ENCODE measurements at regions of chr19 and their contacts with region 1.

Region 1: DNA sequence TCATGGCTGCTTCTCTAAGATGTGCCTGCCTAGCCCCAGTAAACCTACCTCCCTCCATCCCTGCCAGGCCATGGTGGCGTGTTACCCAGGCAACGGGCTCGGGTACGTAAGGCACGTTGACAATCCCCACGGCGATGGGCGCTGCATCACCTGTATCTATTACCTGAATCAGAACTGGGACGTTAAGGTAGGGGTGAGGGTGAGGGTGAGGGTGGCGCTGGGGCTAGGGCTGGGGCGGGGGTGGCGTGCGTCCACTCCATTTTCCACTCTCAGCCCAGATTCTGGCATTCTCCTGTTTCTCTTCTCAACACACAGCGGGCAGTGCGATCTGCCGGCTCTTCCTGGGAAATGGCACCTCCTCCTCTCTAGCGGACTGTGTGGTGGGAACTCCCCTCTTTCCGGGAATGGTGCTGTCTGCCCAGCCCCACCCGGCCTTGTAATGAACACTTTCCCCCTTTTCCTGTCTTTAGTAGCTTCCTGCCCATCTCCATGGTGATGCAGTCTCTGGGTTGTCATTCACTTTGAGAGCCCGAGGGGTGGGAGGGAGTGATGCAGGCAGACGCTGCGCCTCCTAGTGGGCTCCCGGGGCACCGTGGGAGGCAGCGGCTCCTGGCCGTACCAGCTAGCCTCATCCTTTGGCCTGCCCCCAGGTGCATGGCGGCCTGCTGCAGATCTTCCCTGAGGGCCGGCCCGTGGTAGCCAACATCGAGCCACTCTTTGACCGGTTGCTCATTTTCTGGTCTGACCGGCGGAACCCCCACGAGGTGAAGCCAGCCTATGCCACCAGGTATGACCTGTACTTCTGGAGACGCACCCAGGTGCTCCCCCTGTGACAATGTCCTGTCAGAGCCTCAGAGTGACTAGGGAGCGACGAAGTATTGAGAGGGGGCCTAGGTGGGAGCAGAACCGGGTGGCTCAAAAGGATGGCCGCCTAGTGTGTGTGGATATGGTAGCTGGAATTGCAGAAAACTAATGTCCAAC is 7.8 kb downstream of the EGLN2 start:
- DNase-seq: peak; percentile 81
- H3K4me3 ChIP-seq: no peak overlapping the region
- H3K27ac ChIP-seq: peak overlapping the region; percentile 81
- H3K4me1 ChIP-seq: peaks cover 66% of the 10 kb centered on the region
- CTCF ChIP-seq: peak; percentile 92

Region 2: GRCh38 chr19:39833464-39834286 is 973.1 kb before region 1 on chr19 and contains the start of gene DYRK1B:
- CTCF ChIA-PET with region 1: interaction called, 12 read pairs
- POLR2A ChIA-PET with region 1: no interaction called
- intact Hi-C with region 1: no loop called
- DNase-seq: peak; percentile 97
- H3K4me3 ChIP-seq: peak within 1 kb of the TSS; percentile 68
- H3K27ac ChIP-seq: peak within 1 kb of the TSS; percentile 22
- H3K4me1 ChIP-seq: peaks cover 16% of the 10 kb centered on the region
- CTCF ChIP-seq: no peak
- total RNA-seq, gene DYRK1B: 2.0 and 3.0 TPM in 2 replicates

Region 3: DNA sequence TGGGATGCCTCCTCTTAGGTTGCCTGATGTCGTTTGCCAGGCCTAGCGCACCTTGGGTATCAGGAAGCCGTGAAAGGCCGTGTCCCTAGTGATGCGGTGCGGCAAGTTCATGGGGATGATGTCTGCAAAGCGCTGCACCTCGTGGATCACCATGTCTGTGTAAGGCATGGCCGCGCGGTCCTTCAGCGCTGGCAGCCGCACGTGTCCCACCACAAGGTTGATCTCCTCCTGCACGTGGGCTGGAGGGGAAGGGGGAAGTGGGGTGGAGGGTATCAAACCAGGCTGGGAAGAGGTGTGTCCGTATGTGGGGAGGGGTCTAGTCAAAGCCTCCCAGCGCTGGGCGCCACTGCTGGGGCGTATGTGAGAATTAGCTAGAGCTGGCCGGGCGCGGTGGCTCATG is 15.4 kb after region 1 on chr19:
- CTCF ChIA-PET with region 1: no interaction called
- POLR2A ChIA-PET with region 1: no interaction called
- intact Hi-C with region 1: no loop called
- DNase-seq: no peak
- H3K4me3 ChIP-seq: no peak overlapping the region
- H3K27ac ChIP-seq: no peak overlapping the region
- H3K4me1 ChIP-seq: peaks cover 22% of the 10 kb centered on the region
- CTCF ChIP-seq: no peak

Measured in OCI-LY7 (cell line).